WTC11 (cell line): ENCODE measurements at regions of chr22 and their contacts with region 1.

Region 1: DNA sequence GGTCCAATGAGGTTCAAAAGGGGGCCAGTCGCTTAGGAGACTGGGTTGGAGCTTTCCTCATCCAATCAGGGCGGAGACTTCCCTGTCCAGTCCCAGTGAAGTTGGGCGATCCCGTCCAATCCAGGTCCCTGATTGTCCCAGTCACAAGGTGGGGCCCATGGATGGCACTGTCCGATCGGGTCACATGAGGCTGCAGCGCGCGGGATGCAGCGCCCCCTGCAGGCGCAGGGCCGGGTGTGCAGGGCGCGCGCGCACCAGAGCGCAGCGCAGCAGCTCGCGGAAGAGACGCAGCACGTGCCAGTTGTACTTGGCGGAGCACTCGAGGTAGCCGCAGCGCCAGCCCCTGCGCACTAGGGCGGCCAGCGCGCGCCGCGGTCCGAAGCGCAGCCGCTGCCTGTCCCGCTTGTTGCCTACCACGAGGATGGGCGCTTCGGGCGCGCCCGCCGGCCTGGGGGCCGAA is 2.3 kb downstream of the RASL10A start:
- DNase-seq: peak; percentile 79
- ATAC-seq: peak; percentile 73
- H3K4me3 Mint-ChIP-seq: no peak overlapping the region
- H3K27ac Mint-ChIP-seq: no peak overlapping the region
- H3K4me1 Mint-ChIP-seq: peaks cover 17% of the 10 kb centered on the region
- H3K27me3 Mint-ChIP-seq: peaks cover 55% of the 10 kb centered on the region
- CTCF ChIP-seq: peak; percentile 99

Region 2: DNA sequence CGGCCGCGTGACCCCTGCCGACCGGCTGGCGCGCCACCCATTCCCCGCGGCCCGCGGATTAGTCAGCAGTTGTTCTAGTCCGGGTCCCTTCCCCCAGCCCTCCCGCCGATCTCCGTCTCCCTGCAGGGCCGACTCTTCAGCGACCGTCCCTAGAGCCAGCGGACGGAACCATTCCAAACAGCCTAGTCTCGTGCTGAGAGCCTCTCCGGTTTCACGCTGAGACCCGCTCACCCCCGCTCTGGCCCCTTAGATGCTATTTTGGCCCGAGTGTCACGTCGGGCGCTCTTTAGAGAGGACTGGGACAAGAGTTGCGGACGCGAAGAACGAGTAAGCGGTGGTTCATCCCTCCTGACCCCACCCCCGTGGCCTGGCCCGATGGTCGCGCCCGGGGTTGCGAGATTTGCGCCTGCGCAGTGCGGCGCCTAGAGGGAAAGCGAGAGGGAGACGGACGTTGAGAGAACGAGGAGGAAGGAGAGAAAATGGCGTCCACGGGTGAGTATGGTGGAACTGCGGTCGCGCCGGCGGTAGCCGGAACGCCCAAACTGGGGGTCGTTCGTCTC is 45.2 kb before region 1 on chr22 and contains the starts of genes EWSR1 and RHBDD3:
- CTCF ChIA-PET with region 1: interaction called, 10 read pairs
- POLR2A ChIA-PET with region 1: no interaction called
- DNase-seq: peak; percentile 91
- ATAC-seq: peak; percentile 77
- H3K4me3 Mint-ChIP-seq: peak within 1 kb of the TSS; percentile 85
- H3K27ac Mint-ChIP-seq: peak within 1 kb of the TSS; percentile 96
- H3K4me1 Mint-ChIP-seq: peaks cover 41% of the 10 kb centered on the region
- H3K27me3 Mint-ChIP-seq: peaks cover 4% of the 10 kb centered on the region
- CTCF ChIP-seq: no peak
- total RNA-seq, gene EWSR1: 377 to 400 TPM (median 384 TPM) in 3 replicates
- total RNA-seq, gene RHBDD3: 69.6 to 78.2 TPM (median 77.9 TPM) in 3 replicates

Region 3: GRCh38 chr22:29302681-29303465 is 10.3 kb before region 1 on chr22:
- CTCF ChIA-PET with region 1: interaction called, 52 read pairs
- POLR2A ChIA-PET with region 1: interaction called, 5 read pairs
- DNase-seq: no peak
- ATAC-seq: no peak
- H3K4me3 Mint-ChIP-seq: no peak overlapping the region
- H3K27ac Mint-ChIP-seq: peak overlapping the region; percentile 49; the same call in 1 of the 2 replicates
- H3K4me1 Mint-ChIP-seq: peaks cover 17% of the 10 kb centered on the region
- H3K27me3 Mint-ChIP-seq: peaks cover 4% of the 10 kb centered on the region; the same call in 1 of the 2 replicates
- CTCF ChIP-seq: no peak

Region 4: DNA sequence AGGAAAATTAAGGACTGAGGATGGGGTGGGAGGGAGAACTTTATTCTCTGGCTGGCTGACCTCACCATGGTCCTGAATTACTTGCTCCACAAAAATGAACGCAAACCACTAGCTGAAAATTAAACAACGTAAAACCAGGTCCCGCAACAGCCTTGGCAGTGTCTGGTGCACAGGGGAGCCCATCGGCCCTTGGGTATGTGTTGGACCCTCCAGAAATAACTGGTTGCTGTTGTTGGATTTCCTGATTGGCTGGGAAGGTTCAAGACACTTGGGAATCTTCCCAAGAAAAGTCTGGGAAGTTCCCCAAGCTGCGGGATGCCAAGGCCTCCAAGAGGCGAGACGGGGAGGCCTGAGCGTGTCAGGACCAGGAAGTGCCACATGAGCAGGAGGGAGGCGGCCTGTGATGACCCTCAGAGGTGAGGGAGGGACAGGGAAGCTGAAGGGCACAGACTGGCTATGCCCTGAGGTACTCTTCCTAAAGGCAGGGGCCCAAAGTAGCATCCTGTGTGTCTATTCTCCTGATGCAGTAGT is 12.7 kb after region 1 on chr22:
- CTCF ChIA-PET with region 1: interaction called, 10 read pairs
- POLR2A ChIA-PET with region 1: no interaction called
- DNase-seq: no peak
- ATAC-seq: no peak; the same call in 1 of the 2 replicates
- H3K4me3 Mint-ChIP-seq: no peak overlapping the region
- H3K27ac Mint-ChIP-seq: no peak overlapping the region
- H3K4me1 Mint-ChIP-seq: no peaks in the 10 kb centered on the region
- H3K27me3 Mint-ChIP-seq: no peaks in the 10 kb centered on the region
- CTCF ChIP-seq: no peak